CD4-positive, alpha-beta memory T cell (primary cell): ENCODE measurements at regions of chr6 and their contacts with region 1.

Region 1: DNA sequence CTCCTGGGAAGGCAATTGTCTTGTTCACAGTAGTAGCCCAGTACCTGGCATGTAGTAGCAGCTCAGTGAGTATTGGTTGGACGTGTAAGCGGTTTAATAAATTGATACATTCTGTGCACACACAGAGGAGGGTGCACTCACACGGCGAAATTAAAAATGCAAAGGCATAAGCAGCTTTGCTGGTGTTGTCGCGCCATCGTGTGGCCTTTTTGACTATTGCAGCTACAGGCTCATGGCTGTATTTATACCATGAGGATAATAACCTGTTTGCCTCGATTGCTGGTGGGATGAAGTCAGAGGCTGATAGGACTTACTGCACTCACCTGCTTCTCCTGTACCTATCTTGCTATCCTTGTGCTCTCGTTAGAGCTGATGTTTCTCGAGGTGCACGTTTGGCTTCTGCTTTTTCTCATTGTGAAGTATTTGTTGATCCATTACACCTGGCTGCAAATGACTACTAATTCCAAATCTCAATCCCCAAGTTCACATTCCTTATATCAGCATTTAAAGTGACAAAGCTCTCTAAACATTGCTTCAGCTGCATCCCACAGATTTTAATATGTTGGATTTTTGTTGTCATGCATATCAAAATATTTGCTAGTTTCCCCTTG is 61.5 kb downstream of the TBXT start:
- DNase-seq: peak in 3 of 5 donors; percentile 10 to 33 (median 32)
- H3K4me3 ChIP-seq: no peak overlapping the region
- H3K4me3 Mint-ChIP-seq: peak overlapping the region in 1 of 8 donors; percentile 14
- H3K27ac ChIP-seq: no peak overlapping the region
- H3K27ac Mint-ChIP-seq: no peak overlapping the region
- H3K4me1 ChIP-seq: no peaks in the 10 kb centered on the region
- H3K4me1 Mint-ChIP-seq: peaks cover 0 to 7% (median 2%) of the 10 kb centered on the region in 4 donors
- H3K27me3 ChIP-seq: no peaks in the 10 kb centered on the region
- H3K27me3 Mint-ChIP-seq: peaks cover 10 to 16% of the 10 kb centered on the region in 2 donors

Region 2: DNA sequence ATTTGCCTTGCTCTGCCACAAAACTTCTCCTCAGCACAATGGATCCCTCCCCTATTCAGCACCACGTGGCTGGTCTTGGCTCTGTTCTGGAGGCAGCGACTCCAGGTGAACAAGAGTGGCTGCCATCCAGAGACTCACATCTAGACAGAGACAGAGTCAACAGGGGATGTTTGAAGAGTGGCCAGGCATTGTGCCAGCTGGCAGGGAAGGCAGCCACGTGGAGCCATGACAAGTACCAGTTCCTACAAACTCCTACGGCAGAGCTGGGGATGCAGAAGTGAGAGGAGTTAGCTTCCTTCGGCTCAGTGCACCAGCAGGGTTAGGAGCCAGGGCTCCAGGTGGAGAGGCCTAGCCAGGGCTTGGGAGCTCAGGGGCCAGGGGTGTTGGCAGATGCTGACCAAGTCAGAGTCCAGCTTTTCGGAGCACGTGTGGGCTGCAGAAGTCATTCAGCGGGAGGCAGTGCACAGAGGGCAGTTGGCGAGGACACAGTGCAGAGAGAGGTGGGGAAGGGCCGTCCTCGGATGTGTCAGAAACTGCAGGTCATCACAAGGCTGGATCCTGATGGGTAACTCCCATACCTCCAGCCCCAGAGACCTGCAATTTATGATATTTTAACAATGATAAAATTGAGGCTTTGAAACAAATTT is 271.4 kb before region 1 on chr6:
- CTCF ChIA-PET with region 1: no interaction called
- POLR2A ChIA-PET with region 1: no interaction called
- intact Hi-C with region 1: no loop called
- DNase-seq: no peak
- H3K4me3 ChIP-seq: no peak overlapping the region
- H3K4me3 Mint-ChIP-seq: no peak overlapping the region
- H3K27ac ChIP-seq: no peak overlapping the region
- H3K27ac Mint-ChIP-seq: no peak overlapping the region
- H3K4me1 ChIP-seq: peaks cover 5% of the 10 kb centered on the region
- H3K4me1 Mint-ChIP-seq: peaks cover 5 to 13% (median 10%) of the 10 kb centered on the region in 4 donors
- H3K27me3 ChIP-seq: no peaks in the 10 kb centered on the region
- H3K27me3 Mint-ChIP-seq: peaks cover 18 to 20% of the 10 kb centered on the region in 2 donors

Region 3: DNA sequence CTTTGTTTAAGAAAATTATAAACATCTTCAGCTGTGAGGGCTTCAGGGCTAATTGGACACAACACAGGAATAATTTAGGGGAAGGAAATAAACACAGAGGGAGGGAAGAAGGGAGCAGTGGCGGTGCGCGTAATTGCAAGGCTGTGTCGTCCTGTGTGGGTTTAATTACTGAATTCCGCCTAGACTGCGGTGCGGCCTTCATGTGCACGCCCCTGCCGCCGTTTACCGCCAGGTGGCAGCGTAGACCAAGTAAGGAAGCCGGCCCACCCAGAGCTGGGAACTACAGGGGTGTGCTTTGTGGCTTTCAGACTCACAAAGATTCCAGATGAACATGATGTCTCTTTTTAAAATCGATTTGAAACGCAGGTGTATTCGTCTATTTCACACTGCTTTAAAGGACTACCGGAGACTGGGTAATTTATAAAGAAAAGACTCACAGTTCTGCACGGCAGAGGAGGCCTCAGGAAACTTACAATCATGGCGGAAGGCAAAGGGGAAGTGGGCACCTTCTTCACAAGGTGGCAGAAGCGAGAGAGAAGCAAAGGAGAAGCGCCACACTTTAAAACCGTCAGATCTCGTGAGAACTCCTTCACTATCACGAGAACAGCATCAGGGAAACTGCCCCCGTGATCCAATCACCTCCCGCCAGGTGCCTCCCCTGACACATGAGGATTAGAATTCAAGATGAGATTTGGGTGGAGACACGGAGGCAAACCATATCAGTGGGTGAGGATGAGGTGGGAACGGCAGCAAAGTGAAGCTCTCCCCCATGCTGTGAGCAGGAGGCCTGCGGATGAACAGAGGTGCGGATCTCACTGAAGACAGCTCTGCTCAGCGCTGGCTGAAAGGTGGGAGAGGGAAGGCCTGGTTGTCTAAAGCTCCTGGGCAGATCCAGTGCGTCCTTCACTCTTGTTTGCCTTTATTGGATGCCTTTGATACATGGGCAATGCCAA is 221.1 kb before region 1 on chr6:
- CTCF ChIA-PET with region 1: interaction called, 19 read pairs
- POLR2A ChIA-PET with region 1: no interaction called
- intact Hi-C with region 1: no loop called
- DNase-seq: peak in 4 of 5 donors; percentile 21 to 36 (median 24)
- H3K4me3 ChIP-seq: no peak overlapping the region
- H3K4me3 Mint-ChIP-seq: peak overlapping the region in 5 of 8 donors; percentile 3 to 52 (median 38)
- H3K27ac ChIP-seq: no peak overlapping the region
- H3K27ac Mint-ChIP-seq: peak overlapping the region in 1 of 7 donors; percentile 27
- H3K4me1 ChIP-seq: no peaks in the 10 kb centered on the region
- H3K4me1 Mint-ChIP-seq: peaks cover 0 to 7% (median 4%) of the 10 kb centered on the region in 4 donors
- H3K27me3 ChIP-seq: no peaks in the 10 kb centered on the region
- H3K27me3 Mint-ChIP-seq: peaks cover 10 to 13% of the 10 kb centered on the region in 2 donors

Region 4: DNA sequence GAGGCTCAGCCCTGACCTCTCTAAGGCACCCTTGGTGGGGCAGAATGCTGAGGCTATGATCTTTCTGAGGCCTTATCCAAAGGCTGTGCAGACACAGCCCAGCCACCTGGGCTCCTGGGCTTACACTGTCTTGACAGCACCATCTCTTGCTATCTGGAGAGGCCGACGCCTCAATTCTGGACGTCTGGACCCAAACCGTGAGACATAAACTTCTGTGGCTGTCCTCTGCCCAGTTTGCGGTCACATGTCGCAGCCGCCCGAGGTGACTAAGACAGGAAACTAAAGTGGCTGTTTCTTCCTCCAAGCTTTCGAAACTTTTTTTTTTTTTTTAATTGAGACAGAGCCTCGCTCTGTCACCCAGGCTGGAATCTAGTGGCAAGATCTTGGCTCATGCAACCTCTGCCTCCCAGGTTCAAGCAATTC is 152.7 kb after region 1 on chr6:
- CTCF ChIA-PET with region 1: no interaction called
- POLR2A ChIA-PET with region 1: no interaction called
- intact Hi-C with region 1: no loop called
- DNase-seq: peak in 1 of 5 donors; percentile 68
- H3K4me3 ChIP-seq: no peak overlapping the region
- H3K4me3 Mint-ChIP-seq: peak overlapping the region in 6 of 8 donors; percentile 75 to 87 (median 82)
- H3K27ac ChIP-seq: no peak overlapping the region
- H3K27ac Mint-ChIP-seq: peak overlapping the region in 6 of 7 donors; percentile 36 to 96 (median 92)
- H3K4me1 ChIP-seq: peaks cover 32% of the 10 kb centered on the region
- H3K4me1 Mint-ChIP-seq: peaks cover 4 to 48% (median 34%) of the 10 kb centered on the region in 4 donors
- H3K27me3 ChIP-seq: peaks cover under 1% of the 10 kb centered on the region
- H3K27me3 Mint-ChIP-seq: peaks cover 6 to 8% of the 10 kb centered on the region in 2 donors

Region 5: DNA sequence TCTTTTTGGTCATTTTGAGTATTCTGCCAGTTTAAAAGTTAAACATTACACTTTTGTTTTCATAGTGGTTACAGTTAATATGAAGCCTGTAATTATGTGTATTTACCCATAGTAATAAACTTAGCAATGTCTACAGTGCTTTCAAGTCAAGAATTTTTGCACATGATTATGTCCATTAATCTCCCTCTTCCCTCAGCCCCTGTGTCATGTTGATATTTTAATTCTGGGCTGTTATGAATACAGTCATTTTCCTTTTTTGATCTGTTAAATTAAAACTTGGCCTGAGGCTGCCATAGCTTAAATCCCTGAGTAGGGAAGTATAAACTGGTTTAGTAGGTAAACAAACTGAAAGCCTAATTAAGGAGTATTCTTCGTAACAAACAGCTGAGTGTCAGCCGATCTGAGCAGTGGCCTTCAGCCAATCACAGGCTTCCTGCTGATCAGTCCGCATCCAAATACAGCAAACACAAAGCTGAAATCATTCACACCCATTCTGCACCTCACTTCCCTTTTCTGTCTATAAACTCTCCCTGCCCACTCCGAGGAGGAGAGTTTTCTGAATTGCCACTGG is 245.6 kb after region 1 on chr6:
- CTCF ChIA-PET with region 1: no interaction called
- POLR2A ChIA-PET with region 1: no interaction called
- intact Hi-C with region 1: no loop called
- DNase-seq: no peak
- H3K4me3 ChIP-seq: no peak overlapping the region
- H3K4me3 Mint-ChIP-seq: no peak overlapping the region
- H3K27ac ChIP-seq: no peak overlapping the region
- H3K27ac Mint-ChIP-seq: peak overlapping the region in 2 of 7 donors; percentile 18 to 42
- H3K4me1 ChIP-seq: no peaks in the 10 kb centered on the region
- H3K4me1 Mint-ChIP-seq: no peaks in the 10 kb centered on the region
- H3K27me3 ChIP-seq: no peaks in the 10 kb centered on the region
- H3K27me3 Mint-ChIP-seq: peaks cover 4 to 5% of the 10 kb centered on the region in 2 donors